WTC11 (cell line): ENCODE measurements at regions of chr13 and their contacts with region 1.

Region 1: GRCh38 chr13:32315238-32316027 is at the starts of genes BRCA2 and ZAR1L:
- DNase-seq: peak; percentile 81
- ATAC-seq: peak; percentile 81
- H3K4me3 Mint-ChIP-seq: peak within 1 kb of the TSS; percentile 87
- H3K27ac Mint-ChIP-seq: peak within 1 kb of the TSS; percentile 97
- H3K4me1 Mint-ChIP-seq: peaks cover 12% of the 10 kb centered on the region
- H3K27me3 Mint-ChIP-seq: no peaks in the 10 kb centered on the region; the same call in 1 of the 2 replicates
- CTCF ChIP-seq: no peak
- total RNA-seq, gene BRCA2: 14.8 to 21.6 TPM (median 18.2 TPM) in 3 replicates
- total RNA-seq, gene ZAR1L: 0.25 to 0.48 TPM (median 0.33 TPM) in 3 replicates

Region 2: DNA sequence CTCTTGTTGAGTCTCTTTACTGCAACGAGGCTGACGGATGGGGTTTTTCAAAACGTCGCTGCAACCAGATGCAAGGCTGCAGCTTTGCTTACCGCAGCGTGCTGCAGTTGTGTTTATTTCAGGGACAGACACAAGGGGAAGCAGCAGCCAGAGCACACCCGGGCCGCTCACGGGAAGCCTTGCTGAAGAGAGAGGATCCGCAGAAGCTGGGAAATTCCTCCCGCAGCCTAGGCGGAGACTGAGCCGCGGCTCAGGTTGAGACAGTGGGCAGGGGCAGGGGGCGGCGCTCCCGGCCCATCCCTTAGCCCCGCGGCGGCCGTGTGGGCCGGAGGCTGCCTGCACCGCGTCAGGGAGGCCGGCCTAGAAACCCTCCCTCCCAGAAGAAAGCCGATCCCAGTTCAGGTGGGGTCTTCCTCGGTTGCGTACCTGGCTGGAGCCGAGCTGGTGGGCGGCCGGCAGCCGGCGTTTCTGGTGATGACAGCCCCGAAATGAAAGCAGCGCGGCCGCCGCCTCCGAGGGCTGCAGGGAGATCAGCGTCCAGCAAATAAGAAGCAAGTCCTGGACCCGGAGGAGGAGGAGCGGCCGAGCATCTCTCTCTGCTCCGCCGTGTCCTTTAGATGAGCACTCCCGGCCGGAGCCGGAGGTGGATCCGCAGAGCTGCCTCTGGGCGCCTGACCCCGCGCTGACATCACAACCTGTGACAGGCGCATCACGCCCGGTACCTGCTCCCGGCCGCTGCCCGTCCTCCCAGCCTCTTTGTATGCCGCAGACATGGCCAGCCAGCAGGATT is 284.2 kb before region 1 on chr13 and contains the start of gene FRY:
- CTCF ChIA-PET with region 1: no interaction called
- POLR2A ChIA-PET with region 1: interaction called, 13 read pairs
- DNase-seq: peak; percentile 85
- ATAC-seq: peak; percentile 94
- H3K4me3 Mint-ChIP-seq: peak within 1 kb of the TSS; percentile 78
- H3K27ac Mint-ChIP-seq: peak within 1 kb of the TSS; percentile 92
- H3K4me1 Mint-ChIP-seq: peaks cover 48% of the 10 kb centered on the region
- H3K27me3 Mint-ChIP-seq: no peaks in the 10 kb centered on the region
- CTCF ChIP-seq: no peak
- total RNA-seq, gene FRY: 4.3 to 5.3 TPM (median 4.8 TPM) in 3 replicates